ENCODE measurements at regions of chr9 and their contacts with region 1.

Region 1: DNA sequence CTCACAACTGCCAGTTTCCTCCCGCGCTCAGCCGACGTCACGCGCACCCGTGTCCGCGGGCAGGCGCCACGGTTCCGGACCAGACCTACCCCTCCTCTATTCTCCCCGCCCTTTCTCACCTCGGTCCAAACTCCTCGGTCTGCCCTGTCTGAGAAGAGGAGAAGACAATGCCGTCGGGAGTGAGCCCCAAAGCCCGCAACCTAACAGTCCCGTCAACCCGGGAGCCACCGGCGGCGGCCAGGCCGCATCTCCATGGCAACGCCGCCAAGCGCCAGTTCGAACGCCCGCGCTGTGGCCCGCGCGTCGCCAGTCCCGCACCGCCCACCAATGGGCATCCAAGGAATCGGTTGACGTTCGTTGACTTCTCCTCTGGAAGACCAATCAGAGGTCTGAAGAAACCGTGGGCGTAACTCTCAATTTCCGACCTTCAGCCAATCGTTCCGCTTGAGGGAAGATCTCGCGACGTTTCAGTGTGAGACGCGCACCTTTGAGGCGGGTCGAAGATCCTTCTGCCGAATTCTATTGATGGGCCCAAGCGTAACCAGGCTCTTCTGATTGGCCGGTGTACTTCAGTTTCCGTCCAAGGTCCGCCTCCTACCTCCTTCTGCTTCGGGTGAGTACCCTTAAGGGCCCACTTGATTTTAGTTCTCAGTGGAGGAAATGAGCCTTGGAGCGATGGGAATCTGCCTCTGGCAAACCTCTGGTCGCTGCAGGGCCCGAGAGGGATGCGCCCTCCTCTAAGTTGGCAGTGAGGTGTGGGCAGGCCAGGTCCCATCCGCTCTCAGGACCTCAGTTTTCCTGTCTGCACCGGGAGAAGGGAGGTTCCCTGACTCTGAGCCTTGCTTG is at the starts of genes KIF24 and NUDT2:
- DNase-seq: peak; percentile 95 to 97
- ATAC-seq: peak; percentile 96 to 97 (median 97)
- H3K4me3 ChIP-seq: peak within 1 kb of the TSS; percentile 76
- H3K27ac ChIP-seq: peak within 1 kb of the TSS; percentile 84
- H3K4me1 ChIP-seq: peaks cover 16% of the 10 kb centered on the region
- H3K27me3 ChIP-seq: no peaks in the 10 kb centered on the region
- CTCF ChIP-seq: no peak
- total RNA-seq, gene KIF24: 0.37 to 1.6 (median 0.52) TPM
- total RNA-seq, gene NUDT2: 14.7 to 19.7 (median 16.4) TPM

Region 2: DNA sequence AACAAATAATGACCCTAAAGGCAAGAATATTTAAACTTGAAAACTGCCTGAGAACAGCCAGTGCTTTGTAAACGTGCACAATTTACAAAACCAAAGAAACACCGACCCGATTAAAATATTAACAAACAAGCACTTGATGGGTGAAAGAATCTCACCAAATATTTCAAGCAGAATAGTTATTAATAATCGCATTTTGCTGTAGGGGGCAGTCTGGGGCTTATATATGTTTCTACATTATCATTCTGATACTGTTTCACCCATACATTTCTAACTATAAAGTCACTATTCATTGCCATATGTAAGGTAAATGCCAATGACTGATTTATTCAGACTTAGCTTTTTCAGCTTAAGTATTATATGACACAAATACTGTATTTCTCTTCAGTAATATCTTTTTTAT is 318.2 kb before region 1 on chr9:
- intact Hi-C with region 1: no loop called
- DNase-seq: no peak
- ATAC-seq: peak in 1 of 4 donors; percentile 51
- H3K4me3 ChIP-seq: no peak overlapping the region
- H3K27ac ChIP-seq: no peak overlapping the region
- H3K4me1 ChIP-seq: peaks cover 4% of the 10 kb centered on the region
- H3K27me3 ChIP-seq: no peaks in the 10 kb centered on the region
- CTCF ChIP-seq: no peak

Region 3: GRCh38 chr9:34252670-34253459 is 76.3 kb before region 1 on chr9:
- intact Hi-C with region 1: loop called in 1 of 2 experiments (anchors 5 kb)
- DNase-seq: peak; percentile 68 to 77
- ATAC-seq: peak; percentile 32 to 53 (median 47)
- H3K4me3 ChIP-seq: no peak overlapping the region
- H3K27ac ChIP-seq: peak overlapping the region; percentile 90
- H3K4me1 ChIP-seq: peaks cover 58% of the 10 kb centered on the region
- H3K27me3 ChIP-seq: no peaks in the 10 kb centered on the region
- CTCF ChIP-seq: peak; percentile 85

Region 4: GRCh38 chr9:34267660-34268059 is 61.5 kb before region 1 on chr9:
- intact Hi-C with region 1: no loop called
- DNase-seq: no peak
- ATAC-seq: no peak
- H3K4me3 ChIP-seq: no peak overlapping the region
- H3K27ac ChIP-seq: no peak overlapping the region
- H3K4me1 ChIP-seq: peaks cover 4% of the 10 kb centered on the region
- H3K27me3 ChIP-seq: no peaks in the 10 kb centered on the region
- CTCF ChIP-seq: no peak

Region 5: GRCh38 chr9:34346873-34347799 is 17.9 kb after region 1 on chr9:
- intact Hi-C with region 1: no loop called
- DNase-seq: no peak
- ATAC-seq: no peak
- H3K4me3 ChIP-seq: no peak overlapping the region
- H3K27ac ChIP-seq: no peak overlapping the region
- H3K4me1 ChIP-seq: peaks cover 23% of the 10 kb centered on the region
- H3K27me3 ChIP-seq: no peaks in the 10 kb centered on the region
- CTCF ChIP-seq: no peak

Region 6: GRCh38 chr9:34376596-34377403 is 47.6 kb after region 1 on chr9 and contains the start of gene MYORG:
- intact Hi-C with region 1: loop called (anchors 1 kb)
- DNase-seq: peak; percentile 94 to 98
- ATAC-seq: peak; percentile 82 to 88 (median 86)
- H3K4me3 ChIP-seq: peak within 1 kb of the TSS; percentile 71
- H3K27ac ChIP-seq: peak within 1 kb of the TSS; percentile 78
- H3K4me1 ChIP-seq: peaks cover 29% of the 10 kb centered on the region
- H3K27me3 ChIP-seq: no peaks in the 10 kb centered on the region
- CTCF ChIP-seq: no peak
- total RNA-seq, gene MYORG: 16.3 to 34.1 (median 25.1) TPM

Region 7: DNA sequence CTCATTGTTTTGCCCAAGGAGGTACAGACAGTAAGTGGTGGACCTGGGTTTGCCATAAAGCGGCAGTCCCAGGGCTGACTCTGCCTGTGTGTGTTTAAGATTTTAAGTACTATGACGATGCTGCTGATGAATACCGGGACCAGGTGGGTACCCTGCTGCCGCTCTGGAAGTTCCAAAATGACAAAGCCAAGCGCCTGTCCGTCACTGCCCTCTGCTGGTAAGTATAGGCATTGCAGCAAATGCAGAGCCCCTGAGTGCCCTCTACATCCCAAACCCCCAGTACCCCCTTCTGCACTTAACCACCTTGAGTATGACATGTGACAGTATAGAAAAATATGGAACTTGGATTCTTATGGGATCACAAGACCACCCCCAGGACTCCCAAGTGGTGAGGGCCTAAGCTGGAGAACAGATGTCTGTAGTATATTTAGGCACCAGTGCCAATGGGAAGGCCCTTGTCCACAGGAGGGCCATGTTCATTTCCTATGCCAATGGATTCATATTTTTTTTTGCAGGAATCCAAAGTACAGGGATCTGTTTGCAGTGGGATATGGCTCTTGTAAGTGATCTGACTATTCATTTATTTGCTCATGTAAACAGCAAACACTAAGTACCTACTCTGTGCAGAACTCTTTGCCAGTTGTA is 171.5 kb after region 1 on chr9:
- intact Hi-C with region 1: loop called in 1 of 2 experiments (anchors 2 kb)
- DNase-seq: peak; percentile 33 to 72
- ATAC-seq: peak; percentile 78 to 91 (median 83)
- H3K4me3 ChIP-seq: no peak overlapping the region
- H3K27ac ChIP-seq: no peak overlapping the region
- H3K4me1 ChIP-seq: no peaks in the 10 kb centered on the region
- H3K27me3 ChIP-seq: no peaks in the 10 kb centered on the region
- CTCF ChIP-seq: peak; percentile 99

Region 8: DNA sequence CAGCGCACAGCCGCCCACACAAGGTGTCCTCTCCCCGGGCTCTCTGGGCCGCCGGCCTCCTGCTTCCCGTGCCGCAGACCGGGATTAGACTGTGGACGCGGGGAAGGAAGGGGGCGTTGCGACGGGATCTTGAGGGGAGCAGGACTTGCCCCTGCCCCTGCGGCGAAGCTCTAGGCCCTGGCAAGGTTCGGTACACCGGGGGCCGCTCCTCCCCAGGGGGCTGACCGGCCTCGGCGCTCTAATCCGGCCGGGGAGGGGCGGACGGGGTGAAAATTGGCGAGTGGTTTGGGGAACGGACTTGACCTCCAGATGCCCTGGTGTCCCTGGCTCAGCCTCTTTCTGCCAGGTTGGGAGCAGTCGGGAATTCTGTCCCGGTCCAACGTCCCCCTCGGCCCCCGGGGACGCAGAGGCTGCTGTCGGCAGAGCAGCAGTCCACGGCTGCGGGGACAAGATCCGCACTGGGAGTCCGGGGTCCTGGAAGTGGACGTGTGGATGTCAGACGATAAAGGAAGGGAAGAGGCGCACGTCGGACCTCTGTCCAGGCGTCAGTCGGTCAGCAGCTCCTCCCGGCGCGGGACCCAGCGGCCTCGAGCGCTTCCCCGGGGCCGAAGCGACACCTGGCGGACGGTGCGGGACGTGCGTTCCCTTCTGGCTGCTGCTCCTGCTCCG is 262.2 kb after region 1 on chr9:
- intact Hi-C with region 1: loop called in 1 of 2 experiments (anchors 5 kb)
- DNase-seq: peak; percentile 91 to 94
- ATAC-seq: peak; percentile 76 to 82 (median 81)
- H3K4me3 ChIP-seq: peak overlapping the region; percentile 80
- H3K27ac ChIP-seq: peak overlapping the region; percentile 76
- H3K4me1 ChIP-seq: peaks cover 57% of the 10 kb centered on the region
- H3K27me3 ChIP-seq: no peaks in the 10 kb centered on the region
- CTCF ChIP-seq: peak; percentile 93

Region 9: GRCh38 chr9:34603610-34604231 is 274.5 kb after region 1 on chr9:
- intact Hi-C with region 1: loop called (anchors 5 kb)
- DNase-seq: peak; percentile 82 to 92
- ATAC-seq: peak; percentile 91 to 96 (median 94)
- H3K4me3 ChIP-seq: no peak overlapping the region
- H3K27ac ChIP-seq: no peak overlapping the region
- H3K4me1 ChIP-seq: peaks cover 6% of the 10 kb centered on the region
- H3K27me3 ChIP-seq: no peaks in the 10 kb centered on the region
- CTCF ChIP-seq: peak; percentile 92

Region 10: GRCh38 chr9:36190388-36191287 is 1861.4 kb after region 1 on chr9 and contains the start of gene CLTA:
- intact Hi-C with region 1: no loop called
- DNase-seq: peak; percentile 96 to 97
- ATAC-seq: peak; percentile 97 to 99 (median 99)
- H3K4me3 ChIP-seq: peak within 1 kb of the TSS; percentile 95
- H3K27ac ChIP-seq: peak within 1 kb of the TSS; percentile 97
- H3K4me1 ChIP-seq: peaks cover 41% of the 10 kb centered on the region
- H3K27me3 ChIP-seq: no peaks in the 10 kb centered on the region
- CTCF ChIP-seq: peak; percentile 47
- total RNA-seq, gene CLTA: 52.1 to 58.3 (median 54.6) TPM

Measured in psoas muscle (tissue), 8 donors.